ENCODE measurements at regions of chr7 and their contacts with region 1.

Region 1: DNA sequence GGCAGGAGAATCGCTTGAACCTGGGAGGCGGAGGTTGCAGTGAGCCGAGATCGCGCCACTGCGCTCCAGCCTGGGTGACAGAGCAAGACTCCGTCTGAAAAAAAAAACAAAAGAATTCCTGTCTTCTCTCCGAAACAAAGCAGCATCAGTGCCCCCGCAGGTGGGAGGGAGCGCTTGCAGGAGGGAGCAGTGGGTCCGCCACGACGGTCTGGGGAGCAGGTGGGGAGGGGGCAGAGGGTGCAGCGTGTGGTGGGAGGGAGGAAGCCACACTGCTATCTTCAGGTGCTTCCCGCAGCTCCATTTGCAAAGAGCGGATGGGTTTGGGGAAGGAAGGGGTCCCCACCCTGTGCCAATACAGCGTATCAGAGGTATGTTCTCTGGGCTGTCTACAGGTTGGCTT is 31.7 kb downstream of the LIMK1 start:
- DNase-seq: peak in 1 of 9 experiments; percentile 29
- ATAC-seq: no peak
- H3K4me3 ChIP-seq: no peak overlapping the region
- H3K4me3 Mint-ChIP-seq: no peak overlapping the region
- H3K27ac ChIP-seq: no peak overlapping the region
- H3K27ac Mint-ChIP-seq: no peak overlapping the region
- H3K4me1 ChIP-seq: no peaks in the 10 kb centered on the region
- H3K4me1 Mint-ChIP-seq: no peaks in the 10 kb centered on the region
- H3K27me3 ChIP-seq: no peaks in the 10 kb centered on the region
- H3K27me3 Mint-ChIP-seq: no peaks in the 10 kb centered on the region
- CTCF ChIP-seq: no peak

Region 2: DNA sequence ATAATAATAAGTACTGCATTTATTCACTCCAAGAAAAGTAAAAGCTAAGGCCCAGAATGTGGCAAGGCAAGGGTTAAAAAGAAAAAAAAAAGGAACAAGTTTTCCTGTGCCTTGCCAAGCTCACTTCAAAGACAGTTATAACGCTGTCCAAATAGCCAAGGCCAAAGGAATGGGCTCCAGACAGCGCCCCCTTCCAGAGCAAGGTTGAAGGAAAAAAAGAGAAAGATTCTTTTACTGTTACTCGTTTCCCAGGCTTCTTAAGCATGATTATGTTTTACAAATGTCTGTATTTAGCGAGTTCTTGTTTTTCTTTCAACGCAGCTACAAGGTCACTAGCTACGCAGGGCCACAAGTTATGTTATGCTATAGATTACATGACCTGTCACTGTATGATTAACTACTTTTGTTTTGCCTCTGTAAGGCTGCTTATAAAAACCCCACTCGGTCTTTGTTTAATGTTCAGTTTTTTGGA is 49.7 kb after region 1 on chr7:
- CTCF ChIA-PET with region 1: no interaction called
- POLR2A ChIA-PET with region 1: no interaction called
- intact Hi-C with region 1: loop called in 1 of 2 experiments (anchors 5 kb)
- DNase-seq: no peak
- ATAC-seq: no peak
- H3K4me3 ChIP-seq: no peak overlapping the region
- H3K4me3 Mint-ChIP-seq: no peak overlapping the region
- H3K27ac ChIP-seq: no peak overlapping the region
- H3K27ac Mint-ChIP-seq: no peak overlapping the region
- H3K4me1 ChIP-seq: no peaks in the 10 kb centered on the region
- H3K4me1 Mint-ChIP-seq: no peaks in the 10 kb centered on the region
- H3K27me3 ChIP-seq: no peaks in the 10 kb centered on the region
- H3K27me3 Mint-ChIP-seq: no peaks in the 10 kb centered on the region
- CTCF ChIP-seq: no peak

Measured in CD8-positive, alpha-beta T cell (primary cell).